Naive thymus-derived CD4-positive, alpha-beta T cell (primary cell): ENCODE measurements at regions of chr19 and their contacts with region 1.

Region 1: DNA sequence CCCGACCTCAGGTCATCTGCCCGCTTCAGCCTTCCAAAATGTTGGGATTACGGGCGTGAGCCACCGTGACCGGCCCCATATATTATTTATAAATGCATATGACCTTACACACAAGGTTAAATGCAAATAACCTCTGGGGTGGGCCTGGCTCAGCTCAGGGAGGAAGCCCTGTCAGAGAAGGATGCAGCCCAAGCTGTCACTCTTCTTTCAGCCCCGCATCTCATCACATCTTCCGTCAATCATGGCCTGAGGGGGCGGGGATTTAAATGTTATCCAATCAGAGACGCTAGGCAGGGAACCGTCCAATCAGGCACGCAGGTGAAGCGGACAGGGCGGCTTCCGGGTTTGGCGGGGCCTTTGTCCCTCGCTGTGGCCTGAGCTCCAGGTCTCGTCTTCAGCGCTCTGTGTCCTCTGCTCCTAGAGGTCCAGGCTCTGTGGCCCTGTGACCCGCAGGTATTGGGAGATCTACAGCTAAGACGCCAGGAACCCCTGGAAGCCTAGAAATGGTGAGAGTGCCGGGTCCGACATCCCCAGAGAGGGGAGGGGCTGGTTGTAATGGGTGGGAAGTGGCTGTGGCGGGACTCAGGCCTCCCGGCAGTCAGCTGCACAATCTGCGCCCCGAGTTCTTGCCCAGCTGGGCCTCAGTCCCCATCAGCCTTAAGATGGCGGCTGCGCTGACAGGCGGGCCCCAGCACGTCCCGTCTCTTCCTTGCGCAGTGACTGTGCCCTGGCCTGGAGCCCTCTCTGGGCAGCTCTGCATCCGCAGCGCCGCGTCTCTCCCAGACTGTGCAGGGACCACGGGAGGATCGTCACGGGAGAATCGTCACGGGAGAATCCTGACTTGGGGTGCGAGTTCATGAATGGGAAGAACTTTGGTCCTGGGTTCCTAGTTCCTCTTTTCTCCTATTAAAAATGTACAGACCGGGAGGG is at the start of gene ZNF430:
- DNase-seq: peak; percentile 75 to 95 (median 93)
- ATAC-seq: peak; percentile 98
- H3K4me3 ChIP-seq: peak within 1 kb of the TSS; percentile 95
- H3K4me3 Mint-ChIP-seq: peak within 1 kb of the TSS; percentile 99 to 100 (median 100)
- H3K27ac ChIP-seq: peak within 1 kb of the TSS; percentile 97
- H3K27ac Mint-ChIP-seq: peak within 1 kb of the TSS; percentile 99 to 100 (median 100)
- H3K4me1 ChIP-seq: peaks cover 14 to 20% of the 10 kb centered on the region in 2 donors
- H3K4me1 Mint-ChIP-seq: peaks cover 32 to 56% (median 52%) of the 10 kb centered on the region in 7 donors
- H3K27me3 ChIP-seq: no peaks in the 10 kb centered on the region
- H3K27me3 Mint-ChIP-seq: no peaks in the 10 kb centered on the region
- total RNA-seq, gene ZNF430: 26.4 to 52.0 (median 42.2) TPM

Region 2: GRCh38 chr19:19515764-19516519 is 1504.6 kb before region 1 on chr19 and contains the start of gene NDUFA13:
- CTCF ChIA-PET with region 1: no interaction called
- POLR2A ChIA-PET with region 1: no interaction called
- intact Hi-C with region 1: loop called in 1 of 2 experiments (anchors 5 kb)
- DNase-seq: peak; percentile 88 to 98 (median 92)
- ATAC-seq: peak; percentile 96
- H3K4me3 ChIP-seq: peak within 1 kb of the TSS; percentile 96
- H3K4me3 Mint-ChIP-seq: peak within 1 kb of the TSS; percentile 89 to 98 (median 95)
- H3K27ac ChIP-seq: peak within 1 kb of the TSS; percentile 83
- H3K27ac Mint-ChIP-seq: peak within 1 kb of the TSS; percentile 89 to 98 (median 96)
- H3K4me1 ChIP-seq: peaks cover 13 to 14% of the 10 kb centered on the region in 2 donors
- H3K4me1 Mint-ChIP-seq: peaks cover 16 to 42% (median 27%) of the 10 kb centered on the region in 7 donors
- H3K27me3 ChIP-seq: no peaks in the 10 kb centered on the region
- H3K27me3 Mint-ChIP-seq: no peaks in the 10 kb centered on the region
- total RNA-seq, gene NDUFA13: 172 to 362 (median 176) TPM

Region 3: GRCh38 chr19:20167020-20167644 is 853.4 kb before region 1 on chr19 and contains the start of gene ZNF486:
- CTCF ChIA-PET with region 1: no interaction called
- POLR2A ChIA-PET with region 1: no interaction called
- intact Hi-C with region 1: loop called in 1 of 2 experiments (anchors 5 kb)
- DNase-seq: peak; percentile 73 to 94 (median 90)
- ATAC-seq: peak; percentile 99
- H3K4me3 ChIP-seq: peak within 1 kb of the TSS; percentile 85
- H3K4me3 Mint-ChIP-seq: peak within 1 kb of the TSS; percentile 90 to 99 (median 95)
- H3K27ac ChIP-seq: peak within 1 kb of the TSS; percentile 76
- H3K27ac Mint-ChIP-seq: peak within 1 kb of the TSS; percentile 83 to 98 (median 90)
- H3K4me1 ChIP-seq: peaks cover 9 to 13% of the 10 kb centered on the region in 2 donors
- H3K4me1 Mint-ChIP-seq: peaks cover 13 to 42% (median 36%) of the 10 kb centered on the region in 7 donors
- H3K27me3 ChIP-seq: no peaks in the 10 kb centered on the region
- H3K27me3 Mint-ChIP-seq: no peaks in the 10 kb centered on the region
- total RNA-seq, gene ZNF486: 3.3 to 10.3 (median 4.8) TPM

Region 4: DNA sequence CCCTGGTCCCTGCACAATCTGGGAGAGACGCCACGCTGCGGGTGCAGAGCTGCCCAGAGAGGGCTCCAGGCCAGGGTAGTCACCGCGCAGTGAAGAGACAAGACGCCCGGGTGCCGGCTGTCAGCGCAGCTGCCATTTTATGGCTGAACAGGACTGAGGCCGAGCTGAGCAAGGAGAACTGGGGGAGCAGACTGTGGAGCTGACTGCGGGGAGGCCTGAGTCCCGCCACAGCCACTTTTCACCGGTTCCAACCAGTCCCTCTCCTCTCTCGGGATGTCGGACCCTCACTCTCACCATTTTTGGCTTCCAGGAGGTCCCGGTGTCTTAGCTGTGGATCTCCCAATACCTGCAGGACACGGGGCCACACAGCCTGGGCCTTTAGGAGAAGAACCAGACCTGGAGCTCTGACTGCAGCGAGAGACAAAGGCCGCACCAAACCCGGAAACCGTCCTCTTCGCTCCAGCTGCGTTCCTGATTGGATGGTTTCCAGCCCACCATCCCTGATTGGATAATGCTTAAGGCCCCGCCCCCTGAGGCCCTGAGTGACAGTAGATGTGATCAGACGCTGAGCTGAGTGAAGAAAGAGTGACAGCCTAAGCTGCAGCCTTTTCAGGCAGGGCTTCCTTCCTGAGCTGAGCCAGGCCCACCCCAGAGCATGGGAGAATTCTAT is 359.3 kb before region 1 on chr19 and contains the start of gene ZNF626:
- CTCF ChIA-PET with region 1: no interaction called
- POLR2A ChIA-PET with region 1: interaction called, 5 read pairs
- intact Hi-C with region 1: loop called in 1 of 2 experiments (anchors 1 kb)
- DNase-seq: peak; percentile 66 to 92 (median 87)
- ATAC-seq: peak; percentile 99
- H3K4me3 ChIP-seq: peak within 1 kb of the TSS; percentile 89
- H3K4me3 Mint-ChIP-seq: peak within 1 kb of the TSS; percentile 83 to 97 (median 92)
- H3K27ac ChIP-seq: peak within 1 kb of the TSS; percentile 91
- H3K27ac Mint-ChIP-seq: peak within 1 kb of the TSS; percentile 86 to 97 (median 95)
- H3K4me1 ChIP-seq: peaks cover 0 to 6% of the 10 kb centered on the region in 2 donors
- H3K4me1 Mint-ChIP-seq: peaks cover 0 to 54% (median 47%) of the 10 kb centered on the region in 7 donors
- H3K27me3 ChIP-seq: no peaks in the 10 kb centered on the region
- H3K27me3 Mint-ChIP-seq: no peaks in the 10 kb centered on the region
- total RNA-seq, gene ZNF626: 2.2 to 20.0 (median 12.4) TPM

Region 5: GRCh38 chr19:21082011-21082975 is 61.7 kb after region 1 on chr19 and contains the start of gene ZNF714:
- CTCF ChIA-PET with region 1: no interaction called
- POLR2A ChIA-PET with region 1: interaction called, 8 read pairs
- intact Hi-C with region 1: loop called (anchors 1 kb)
- DNase-seq: peak; percentile 55 to 90 (median 80)
- ATAC-seq: peak; percentile 100
- H3K4me3 ChIP-seq: peak within 1 kb of the TSS; percentile 92
- H3K4me3 Mint-ChIP-seq: peak within 1 kb of the TSS; percentile 91 to 100 (median 99)
- H3K27ac ChIP-seq: peak within 1 kb of the TSS; percentile 74
- H3K27ac Mint-ChIP-seq: peak within 1 kb of the TSS; percentile 85 to 99 (median 95)
- H3K4me1 ChIP-seq: no peaks in the 10 kb centered on the region
- H3K4me1 Mint-ChIP-seq: peaks cover 3 to 24% (median 18%) of the 10 kb centered on the region in 7 donors
- H3K27me3 ChIP-seq: no peaks in the 10 kb centered on the region
- H3K27me3 Mint-ChIP-seq: no peaks in the 10 kb centered on the region
- total RNA-seq, gene ZNF714: 7.4 to 22.3 (median 13.3) TPM

Region 6: GRCh38 chr19:21197590-21198295 is 177.2 kb after region 1 on chr19:
- CTCF ChIA-PET with region 1: no interaction called
- POLR2A ChIA-PET with region 1: no interaction called
- intact Hi-C with region 1: no loop called
- DNase-seq: no peak
- ATAC-seq: no peak
- H3K4me3 ChIP-seq: no peak overlapping the region
- H3K4me3 Mint-ChIP-seq: no peak overlapping the region
- H3K27ac ChIP-seq: no peak overlapping the region
- H3K27ac Mint-ChIP-seq: no peak overlapping the region
- H3K4me1 ChIP-seq: no peaks in the 10 kb centered on the region
- H3K4me1 Mint-ChIP-seq: peaks cover 0 to 3% (median 0%) of the 10 kb centered on the region in 7 donors
- H3K27me3 ChIP-seq: no peaks in the 10 kb centered on the region
- H3K27me3 Mint-ChIP-seq: no peaks in the 10 kb centered on the region

Region 7: GRCh38 chr19:21767065-21767800 is 746.7 kb after region 1 on chr19 and contains the start of gene ZNF100:
- CTCF ChIA-PET with region 1: interaction called, 3 read pairs
- POLR2A ChIA-PET with region 1: no interaction called
- intact Hi-C with region 1: loop called (anchors 10 kb)
- DNase-seq: peak; percentile 64 to 88 (median 80)
- ATAC-seq: peak; percentile 98
- H3K4me3 ChIP-seq: peak within 1 kb of the TSS; percentile 97
- H3K4me3 Mint-ChIP-seq: peak within 1 kb of the TSS; percentile 92 to 98 (median 97)
- H3K27ac ChIP-seq: peak within 1 kb of the TSS; percentile 81
- H3K27ac Mint-ChIP-seq: peak within 1 kb of the TSS; percentile 89 to 98 (median 92)
- H3K4me1 ChIP-seq: no peaks in the 10 kb centered on the region
- H3K4me1 Mint-ChIP-seq: peaks cover 7 to 43% (median 27%) of the 10 kb centered on the region in 7 donors
- H3K27me3 ChIP-seq: no peaks in the 10 kb centered on the region
- H3K27me3 Mint-ChIP-seq: no peaks in the 10 kb centered on the region
- total RNA-seq, gene ZNF100: 9.5 to 22.5 (median 18.4) TPM